ENCODE measurements at regions of chr9 and their contacts with region 1.

Region 1: DNA sequence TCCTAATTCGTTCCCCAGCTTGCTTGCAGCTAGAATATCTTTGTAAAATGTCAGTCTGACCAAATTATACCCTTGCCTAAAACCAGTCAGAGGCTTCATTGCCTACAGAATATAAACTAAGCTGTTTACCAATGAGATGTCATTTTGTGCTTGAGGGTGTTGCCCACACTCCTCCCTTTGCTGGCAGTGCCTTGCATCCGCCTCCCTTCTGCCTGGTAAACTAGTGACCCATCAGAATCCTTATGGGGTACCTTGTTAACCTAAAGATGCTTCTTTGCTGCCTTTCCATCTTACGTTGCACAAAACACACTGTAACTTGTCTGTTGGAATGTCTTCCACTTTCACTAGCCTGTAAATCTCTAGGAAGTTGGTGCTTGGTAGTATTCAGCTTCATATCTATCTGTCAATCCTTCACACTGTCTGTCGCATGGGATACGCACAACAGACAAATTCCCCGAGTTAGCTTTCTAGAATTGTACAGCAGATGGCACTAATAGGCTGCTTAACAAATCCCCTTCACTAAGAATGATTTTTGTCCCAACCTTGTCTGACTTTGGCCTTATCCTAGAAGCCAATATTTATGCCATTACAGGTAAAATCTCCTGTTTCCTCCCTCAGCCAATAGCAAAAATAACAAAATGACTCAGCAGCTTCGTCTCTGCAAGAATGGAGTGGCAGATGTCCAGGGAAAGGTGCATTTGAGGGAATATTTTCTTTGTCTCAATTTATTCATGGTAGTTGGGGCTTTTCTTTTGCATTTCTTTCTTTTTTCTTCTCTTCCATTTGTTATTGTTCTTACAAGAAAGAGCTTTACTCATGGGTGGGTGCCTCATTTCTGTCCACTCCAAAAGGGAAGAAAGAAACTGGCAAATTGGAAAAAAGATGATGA is 3.0 kb downstream of the NUDT2 start:
- DNase-seq: no peak
- ATAC-seq: no peak

Region 2: GRCh38 chr9:34126207-34127034 is 205.9 kb before region 1 on chr9 and contains the start of gene DCAF12:
- intact Hi-C with region 1: no loop called
- DNase-seq: peak; percentile 95
- ATAC-seq: peak; percentile 97
- total RNA-seq, gene DCAF12: 17.6 TPM

Region 3: DNA sequence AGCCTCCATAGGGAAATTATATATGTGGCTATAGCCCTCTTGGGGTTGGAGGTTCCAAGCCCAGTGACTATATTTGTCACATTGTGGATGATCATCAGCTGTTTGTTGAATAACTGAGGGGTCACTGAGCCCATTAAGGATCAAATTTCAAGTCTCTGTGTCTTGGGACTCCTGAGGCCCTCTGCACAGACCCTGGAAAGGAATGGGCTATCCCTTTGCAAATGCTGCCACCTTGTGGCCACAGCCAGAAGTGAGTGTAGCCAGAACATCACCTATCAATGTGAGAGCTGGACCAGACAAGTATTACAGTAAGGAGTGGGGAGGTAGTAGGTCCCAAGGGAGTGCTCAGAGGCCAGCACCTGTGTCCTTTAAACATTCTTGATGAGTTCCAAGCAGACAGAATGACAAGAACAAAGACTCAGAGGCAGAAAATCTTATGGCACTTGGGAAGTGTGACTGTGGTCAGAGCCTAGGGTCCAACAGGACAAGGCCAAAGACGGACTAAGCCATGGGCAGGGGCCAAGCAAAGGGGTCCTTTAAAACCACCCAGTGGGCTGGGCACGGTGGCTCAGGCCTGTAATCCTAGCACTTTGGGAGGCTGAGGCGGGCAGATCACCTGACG is 271.4 kb after region 1 on chr9:
- intact Hi-C with region 1: loop called (anchors 5 kb)
- DNase-seq: peak; percentile 90
- ATAC-seq: peak; percentile 84